ENCODE measurements at regions of chr1 and their contacts with region 1.

Region 1: GRCh38 chr1:32072622-32073298 is at the start of gene TMEM39B:
- DNase-seq: peak; percentile 85 to 97 (median 92)
- ATAC-seq: peak; percentile 86
- H3K4me3 ChIP-seq: peak within 1 kb of the TSS; percentile 75 to 99
- H3K4me3 Mint-ChIP-seq: peak within 1 kb of the TSS; percentile 82
- H3K27ac ChIP-seq: peak within 1 kb of the TSS; percentile 65 to 74
- H3K27ac Mint-ChIP-seq: peak within 1 kb of the TSS; percentile 86
- H3K4me1 ChIP-seq: peaks cover 18% of the 10 kb centered on the region
- H3K4me1 Mint-ChIP-seq: peaks cover 32% of the 10 kb centered on the region
- H3K27me3 ChIP-seq: no peaks in the 10 kb centered on the region
- H3K27me3 Mint-ChIP-seq: no peaks in the 10 kb centered on the region
- CTCF ChIP-seq: no peak
- total RNA-seq, gene TMEM39B: 6.6 to 7.6 TPM

Region 2: DNA sequence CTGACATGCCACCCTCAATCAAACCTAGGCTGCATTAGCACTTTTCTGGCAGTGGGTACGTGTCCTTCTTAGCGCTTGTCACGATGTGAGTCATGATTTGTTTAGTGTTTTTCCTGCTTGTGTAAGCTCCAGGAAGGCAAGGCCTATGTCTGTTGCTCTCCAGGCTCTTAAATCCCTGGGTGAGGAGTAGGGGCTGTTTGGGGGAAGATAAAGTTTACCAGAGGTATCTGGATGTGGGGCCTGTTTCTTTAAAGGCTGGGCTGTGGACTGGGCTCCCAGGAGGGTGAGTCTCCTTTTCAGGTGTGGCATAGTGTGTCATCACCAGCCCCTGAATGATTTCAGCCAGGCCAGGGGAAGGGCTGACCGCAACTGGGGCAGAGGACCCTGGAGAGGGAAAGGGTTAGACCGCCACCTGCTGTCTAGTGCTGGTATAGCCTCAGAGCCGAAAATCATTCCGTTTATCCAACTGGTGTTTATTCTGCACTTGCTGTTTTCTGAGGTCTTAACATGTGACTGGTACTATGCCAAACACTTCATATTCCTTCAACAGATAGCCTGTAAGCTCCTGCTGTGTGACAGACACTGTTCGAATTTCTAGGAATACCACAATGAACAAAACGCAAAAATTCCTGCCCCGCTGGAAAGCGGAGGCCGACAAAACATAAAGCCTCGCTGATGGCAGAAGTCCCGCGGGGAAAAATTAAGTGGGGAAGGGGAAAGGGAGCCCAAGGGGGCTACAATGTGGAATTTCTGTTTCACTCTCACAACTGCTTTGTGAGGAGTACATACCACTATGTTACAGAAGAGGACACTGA is 650.0 kb before region 1 on chr1:
- CTCF ChIA-PET with region 1: no interaction called
- POLR2A ChIA-PET with region 1: no interaction called
- intact Hi-C with region 1: no loop called
- DNase-seq: peak; percentile 27 to 78 (median 67)
- ATAC-seq: peak; percentile 77
- H3K4me3 ChIP-seq: no peak overlapping the region
- H3K4me3 Mint-ChIP-seq: no peak overlapping the region
- H3K27ac ChIP-seq: no peak overlapping the region
- H3K27ac Mint-ChIP-seq: no peak overlapping the region
- H3K4me1 ChIP-seq: no peaks in the 10 kb centered on the region
- H3K4me1 Mint-ChIP-seq: no peaks in the 10 kb centered on the region
- H3K27me3 ChIP-seq: no peaks in the 10 kb centered on the region
- H3K27me3 Mint-ChIP-seq: peaks cover 24% of the 10 kb centered on the region
- CTCF ChIP-seq: peak; percentile 86

Region 3: DNA sequence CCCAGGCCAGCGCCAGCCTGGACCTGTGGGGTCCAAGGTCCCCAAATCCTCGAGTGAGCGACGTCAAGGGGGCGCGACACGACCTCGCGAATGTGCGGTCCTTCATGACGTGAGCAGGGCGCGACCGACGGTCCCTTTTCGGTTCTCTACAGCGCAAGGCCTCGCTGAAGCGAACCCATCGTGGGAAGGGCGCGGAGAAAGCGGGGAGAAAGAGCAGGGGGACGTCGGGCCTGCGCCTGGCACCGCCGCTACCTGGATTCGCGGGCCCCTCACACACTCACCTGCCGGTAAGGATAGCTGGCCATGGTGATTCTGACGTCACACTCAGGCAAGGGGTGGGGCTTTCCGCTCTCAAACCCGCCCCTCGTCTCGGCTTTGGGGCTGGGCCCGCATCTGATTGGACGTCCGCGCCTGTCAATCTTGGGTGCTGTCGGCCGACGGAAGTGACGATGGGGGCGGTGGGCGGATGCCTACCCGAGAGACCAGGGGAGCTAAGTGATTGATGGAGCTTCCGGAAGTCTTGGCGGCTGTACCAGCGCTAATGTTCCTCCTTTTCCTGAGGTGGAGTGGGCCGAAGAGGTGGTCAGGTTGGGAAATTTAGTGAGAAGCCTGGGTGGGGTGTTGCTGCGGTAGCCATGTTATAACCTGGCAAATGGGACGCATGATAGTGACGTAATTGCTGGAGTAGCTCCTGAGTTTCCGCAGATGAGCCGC is 428.0 kb before region 1 on chr1 and contains the start of gene PEF1:
- CTCF ChIA-PET with region 1: interaction called, 3 read pairs
- POLR2A ChIA-PET with region 1: interaction called, 3 read pairs
- intact Hi-C with region 1: loop called in 1 of 2 experiments (anchors 2 kb)
- DNase-seq: peak; percentile 99 to 100 (median 99)
- ATAC-seq: peak; percentile 91
- H3K4me3 ChIP-seq: peak within 1 kb of the TSS; percentile 92 to 97
- H3K4me3 Mint-ChIP-seq: peak within 1 kb of the TSS; percentile 100
- H3K27ac ChIP-seq: peak within 1 kb of the TSS; percentile 99
- H3K27ac Mint-ChIP-seq: peak within 1 kb of the TSS; percentile 100
- H3K4me1 ChIP-seq: peaks cover 30% of the 10 kb centered on the region
- H3K4me1 Mint-ChIP-seq: peaks cover 40% of the 10 kb centered on the region
- H3K27me3 ChIP-seq: no peaks in the 10 kb centered on the region
- H3K27me3 Mint-ChIP-seq: no peaks in the 10 kb centered on the region
- CTCF ChIP-seq: no peak
- total RNA-seq, gene PEF1: 35.8 to 36.6 TPM

Region 4: DNA sequence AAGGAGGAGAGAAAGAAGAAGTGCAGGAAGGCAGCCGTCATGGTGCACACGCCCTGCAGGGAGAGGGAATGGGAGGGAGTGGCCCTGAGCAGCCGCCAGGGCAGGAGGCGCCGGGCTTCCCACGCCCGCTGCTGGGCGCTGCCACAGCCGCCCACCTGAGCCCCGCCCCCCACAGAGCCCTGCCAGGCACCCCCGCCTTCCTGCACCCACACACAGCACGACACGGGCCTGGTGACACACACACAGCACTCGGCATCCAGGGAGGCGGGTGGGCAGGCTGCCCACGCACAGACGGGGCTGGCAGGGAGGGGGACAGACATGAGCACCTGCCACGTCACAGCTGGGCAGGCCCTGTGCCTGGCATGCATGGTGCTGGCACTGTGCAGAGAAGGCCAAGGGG is 336.1 kb before region 1 on chr1:
- CTCF ChIA-PET with region 1: no interaction called
- POLR2A ChIA-PET with region 1: no interaction called
- intact Hi-C with region 1: no loop called
- DNase-seq: peak in 4 of 9 experiments; percentile 39 to 63 (median 48)
- ATAC-seq: peak; percentile 81
- H3K4me3 ChIP-seq: no peak overlapping the region
- H3K4me3 Mint-ChIP-seq: no peak overlapping the region
- H3K27ac ChIP-seq: no peak overlapping the region
- H3K27ac Mint-ChIP-seq: no peak overlapping the region
- H3K4me1 ChIP-seq: peaks cover 10% of the 10 kb centered on the region
- H3K4me1 Mint-ChIP-seq: peaks cover 11% of the 10 kb centered on the region
- H3K27me3 ChIP-seq: no peaks in the 10 kb centered on the region
- H3K27me3 Mint-ChIP-seq: no peaks in the 10 kb centered on the region
- CTCF ChIP-seq: no peak

Region 5: GRCh38 chr1:31944205-31945089 is 128.3 kb before region 1 on chr1:
- CTCF ChIA-PET with region 1: no interaction called
- POLR2A ChIA-PET with region 1: interaction called, 9 read pairs
- intact Hi-C with region 1: loop called in 1 of 2 experiments (anchors 2 kb)
- DNase-seq: peak; percentile 49 to 92 (median 85)
- ATAC-seq: peak; percentile 61
- H3K4me3 ChIP-seq: peak overlapping the region; percentile 36 to 65
- H3K4me3 Mint-ChIP-seq: peak overlapping the region; percentile 92
- H3K27ac ChIP-seq: peak overlapping the region; percentile 41 to 78
- H3K27ac Mint-ChIP-seq: peak overlapping the region; percentile 97
- H3K4me1 ChIP-seq: peaks cover 47% of the 10 kb centered on the region
- H3K4me1 Mint-ChIP-seq: peaks cover 50% of the 10 kb centered on the region
- H3K27me3 ChIP-seq: no peaks in the 10 kb centered on the region
- H3K27me3 Mint-ChIP-seq: no peaks in the 10 kb centered on the region
- CTCF ChIP-seq: no peak

Region 6: GRCh38 chr1:32052887-32053286 is 19.9 kb before region 1 on chr1:
- CTCF ChIA-PET with region 1: no interaction called
- POLR2A ChIA-PET with region 1: interaction called, 10 read pairs
- intact Hi-C with region 1: no loop called
- DNase-seq: no peak
- ATAC-seq: no peak
- H3K4me3 ChIP-seq: no peak overlapping the region
- H3K4me3 Mint-ChIP-seq: no peak overlapping the region
- H3K27ac ChIP-seq: no peak overlapping the region
- H3K27ac Mint-ChIP-seq: no peak overlapping the region
- H3K4me1 ChIP-seq: no peaks in the 10 kb centered on the region
- H3K4me1 Mint-ChIP-seq: no peaks in the 10 kb centered on the region
- H3K27me3 ChIP-seq: no peaks in the 10 kb centered on the region
- H3K27me3 Mint-ChIP-seq: no peaks in the 10 kb centered on the region
- CTCF ChIP-seq: no peak

Region 7: DNA sequence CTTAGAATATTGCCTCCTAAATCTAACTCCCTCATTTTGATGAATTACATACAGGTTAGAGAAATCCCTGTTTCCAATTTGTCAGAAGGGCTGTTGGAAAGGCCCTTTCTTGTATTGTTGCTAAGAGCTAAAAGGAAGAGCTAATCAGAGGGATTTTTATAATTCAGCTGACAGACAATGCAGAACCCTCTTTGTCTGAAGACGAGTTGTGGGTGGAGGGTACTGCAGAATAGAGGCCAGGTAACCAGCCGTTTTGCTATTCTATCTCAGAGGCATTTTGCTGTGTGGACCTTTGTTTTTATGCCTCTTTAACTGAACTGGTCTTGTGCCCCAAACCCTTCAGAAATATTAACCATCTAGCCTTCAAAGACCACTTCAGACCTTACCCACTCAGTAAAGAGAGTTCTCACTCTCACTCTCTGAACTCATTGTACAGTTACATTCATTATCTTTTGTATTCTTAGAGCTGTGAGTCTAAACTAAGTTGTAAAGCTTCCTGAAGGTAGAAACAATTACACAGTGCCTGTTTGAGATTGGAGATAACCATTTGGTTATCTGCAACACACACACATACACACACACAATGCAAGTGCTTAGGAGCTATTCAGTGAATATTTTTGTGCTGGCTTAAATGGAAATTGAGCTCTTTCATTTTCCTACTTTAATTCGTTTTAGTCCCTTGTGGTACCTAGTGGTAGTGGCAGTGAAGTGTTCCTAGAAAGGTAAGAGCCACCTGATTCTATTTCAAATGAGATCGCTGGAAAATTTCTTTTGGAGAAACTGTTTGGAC is 54.8 kb after region 1 on chr1:
- CTCF ChIA-PET with region 1: no interaction called
- POLR2A ChIA-PET with region 1: no interaction called
- intact Hi-C with region 1: no loop called
- DNase-seq: no peak
- ATAC-seq: no peak
- H3K4me3 ChIP-seq: no peak overlapping the region
- H3K4me3 Mint-ChIP-seq: no peak overlapping the region
- H3K27ac ChIP-seq: no peak overlapping the region
- H3K27ac Mint-ChIP-seq: peak overlapping the region; percentile 7
- H3K4me1 ChIP-seq: peaks cover 26% of the 10 kb centered on the region
- H3K4me1 Mint-ChIP-seq: peaks cover 56% of the 10 kb centered on the region
- H3K27me3 ChIP-seq: no peaks in the 10 kb centered on the region
- H3K27me3 Mint-ChIP-seq: no peaks in the 10 kb centered on the region
- CTCF ChIP-seq: no peak

Region 8: GRCh38 chr1:32179443-32180185 is 106.9 kb after region 1 on chr1 and contains the start of gene TXLNA:
- CTCF ChIA-PET with region 1: no interaction called
- POLR2A ChIA-PET with region 1: interaction called, 9 read pairs
- intact Hi-C with region 1: loop called in 1 of 2 experiments (anchors 1 kb)
- DNase-seq: peak; percentile 66 to 93 (median 88)
- ATAC-seq: peak; percentile 88
- H3K4me3 ChIP-seq: peak within 1 kb of the TSS; percentile 67 to 85
- H3K4me3 Mint-ChIP-seq: peak within 1 kb of the TSS; percentile 84
- H3K27ac ChIP-seq: peak within 1 kb of the TSS; percentile 70 to 89
- H3K27ac Mint-ChIP-seq: peak within 1 kb of the TSS; percentile 93
- H3K4me1 ChIP-seq: peaks cover 26% of the 10 kb centered on the region
- H3K4me1 Mint-ChIP-seq: peaks cover 44% of the 10 kb centered on the region
- H3K27me3 ChIP-seq: no peaks in the 10 kb centered on the region
- H3K27me3 Mint-ChIP-seq: no peaks in the 10 kb centered on the region
- CTCF ChIP-seq: no peak
- total RNA-seq, gene TXLNA: 7.5 to 8.9 TPM

Region 9: DNA sequence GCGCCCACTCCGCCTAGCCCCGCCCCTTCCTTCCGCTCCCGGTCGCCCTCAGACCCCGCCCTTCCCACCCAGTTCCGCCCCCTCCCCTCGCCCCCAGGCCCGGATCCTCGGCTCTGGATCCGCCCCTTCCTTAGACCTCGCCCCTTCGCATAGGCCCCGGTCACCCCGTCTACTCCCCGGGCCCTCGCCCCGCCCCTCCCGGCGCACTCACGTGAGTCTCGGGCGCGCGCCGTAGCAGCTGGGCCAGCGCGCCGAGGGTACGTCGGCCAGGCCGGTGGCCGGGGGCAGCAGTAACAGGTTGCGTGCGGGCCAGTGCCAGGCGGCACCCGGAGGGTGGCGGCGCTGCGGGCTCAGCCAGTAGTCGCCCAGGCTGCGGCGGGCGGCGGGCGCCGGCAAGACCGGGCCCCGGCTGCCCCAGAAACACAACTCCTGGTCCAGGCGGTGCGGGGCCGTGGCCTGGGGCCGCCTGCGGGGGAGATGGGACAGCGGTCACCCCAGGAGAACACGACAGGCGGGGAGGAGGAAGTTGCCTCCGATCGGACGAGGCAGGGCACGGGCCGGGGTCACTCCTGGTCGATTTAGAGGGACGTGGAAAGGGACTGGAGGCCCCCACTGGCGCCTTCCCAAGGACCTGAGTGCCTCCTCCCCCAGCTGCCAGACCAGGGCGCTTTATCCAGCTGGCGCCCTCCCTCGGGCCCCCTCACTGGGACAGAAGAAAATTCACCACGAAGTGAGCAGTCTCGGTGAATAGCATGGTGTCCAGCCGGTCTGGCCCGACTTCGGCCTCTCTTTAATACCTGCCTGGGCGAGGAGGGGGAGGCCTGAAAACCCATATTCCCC is 278.9 kb after region 1 on chr1:
- CTCF ChIA-PET with region 1: no interaction called
- POLR2A ChIA-PET with region 1: no interaction called
- intact Hi-C with region 1: loop called (anchors 1 to 2 kb)
- DNase-seq: peak; percentile 81 to 97 (median 90)
- ATAC-seq: peak; percentile 95
- H3K4me3 ChIP-seq: peak overlapping the region; percentile 57 to 85
- H3K4me3 Mint-ChIP-seq: peak overlapping the region; percentile 81
- H3K27ac ChIP-seq: peak overlapping the region; percentile 60 to 69
- H3K27ac Mint-ChIP-seq: peak overlapping the region; percentile 49
- H3K4me1 ChIP-seq: peaks cover 30% of the 10 kb centered on the region
- H3K4me1 Mint-ChIP-seq: peaks cover 49% of the 10 kb centered on the region
- H3K27me3 ChIP-seq: no peaks in the 10 kb centered on the region
- H3K27me3 Mint-ChIP-seq: no peaks in the 10 kb centered on the region
- CTCF ChIP-seq: no peak

Region 10: GRCh38 chr1:32650752-32651460 is 578.1 kb after region 1 on chr1 and contains the start of gene RBBP4:
- CTCF ChIA-PET with region 1: no interaction called
- POLR2A ChIA-PET with region 1: no interaction called
- intact Hi-C with region 1: loop called in 1 of 2 experiments (anchors 2 kb)
- DNase-seq: peak; percentile 96 to 100 (median 99)
- ATAC-seq: peak; percentile 83
- H3K4me3 ChIP-seq: peak within 1 kb of the TSS; percentile 82 to 97
- H3K4me3 Mint-ChIP-seq: peak within 1 kb of the TSS; percentile 93
- H3K27ac ChIP-seq: peak within 1 kb of the TSS; percentile 98 to 99
- H3K27ac Mint-ChIP-seq: peak within 1 kb of the TSS; percentile 99
- H3K4me1 ChIP-seq: peaks cover 51% of the 10 kb centered on the region
- H3K4me1 Mint-ChIP-seq: peaks cover 60% of the 10 kb centered on the region
- H3K27me3 ChIP-seq: no peaks in the 10 kb centered on the region
- H3K27me3 Mint-ChIP-seq: no peaks in the 10 kb centered on the region
- CTCF ChIP-seq: no peak
- total RNA-seq, gene RBBP4: 109 to 121 TPM

Measured in CD8-positive, alpha-beta T cell (primary cell).